Activated CD4-positive, alpha-beta memory T cell treated with anti-CD3 and anti-CD28 coated beads, Interleukin-2, amount 10 ng/mL, durations not matched to agents 7 days and 5 days (primary cell): ENCODE measurements at regions of chr18 and their contacts with region 1.

Region 1: DNA sequence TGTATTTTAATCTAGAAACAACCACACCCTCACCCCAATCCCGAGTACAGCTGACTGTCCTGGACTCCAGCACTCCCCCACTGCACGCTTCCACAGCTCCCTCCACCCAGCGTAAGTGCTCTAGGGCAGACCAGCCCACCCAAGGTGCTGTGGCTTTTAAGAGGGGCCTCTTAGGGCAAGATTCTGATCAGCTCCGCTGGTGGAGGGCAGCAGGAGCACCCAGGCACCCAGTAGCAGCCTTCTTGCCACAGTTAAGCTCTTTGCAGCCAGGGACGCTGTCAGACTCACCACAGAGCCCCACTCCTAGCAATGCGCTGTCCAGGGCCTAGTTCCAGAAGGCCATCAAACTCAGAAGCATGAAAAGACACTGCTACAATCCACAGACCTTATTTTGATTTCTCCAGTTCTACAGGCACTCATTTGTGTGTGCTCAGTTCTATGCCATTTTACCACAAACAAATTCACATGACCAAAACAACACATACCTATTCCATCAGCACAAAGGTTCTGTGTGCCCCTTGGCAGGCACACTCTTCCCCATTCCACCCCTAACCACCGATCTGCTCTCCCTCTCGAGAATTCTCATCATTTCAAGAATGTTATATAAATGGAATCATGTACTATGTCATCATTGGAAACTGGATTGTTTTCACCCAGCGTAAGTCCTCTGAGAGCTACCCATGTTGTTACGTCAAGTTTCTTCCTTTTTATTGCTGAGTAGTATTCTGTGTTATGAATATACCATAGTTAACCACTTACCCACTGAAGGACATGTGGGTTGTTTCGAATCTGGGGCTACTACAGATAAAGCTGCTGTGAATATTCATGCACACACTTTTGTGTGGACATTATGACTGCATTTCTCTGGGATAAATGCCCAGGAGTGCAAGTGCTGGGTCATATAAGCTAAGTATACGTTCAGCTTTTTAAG is 40.4 kb downstream of the PTPN2 start:
- DNase-seq: no peak
- H3K4me3 Mint-ChIP-seq: peak overlapping the region; percentile 8
- H3K27ac Mint-ChIP-seq: peak overlapping the region; percentile 63
- H3K4me1 Mint-ChIP-seq: peaks cover 72% of the 10 kb centered on the region
- H3K27me3 Mint-ChIP-seq: no peaks in the 10 kb centered on the region

Region 2: GRCh38 chr18:12750076-12750714 is 93.5 kb before region 1 on chr18:
- CTCF ChIA-PET with region 1: no interaction called
- POLR2A ChIA-PET with region 1: no interaction called
- DNase-seq: peak; percentile 28
- H3K4me3 Mint-ChIP-seq: no peak overlapping the region
- H3K27ac Mint-ChIP-seq: no peak overlapping the region
- H3K4me1 Mint-ChIP-seq: peaks cover 13% of the 10 kb centered on the region
- H3K27me3 Mint-ChIP-seq: peaks cover 4% of the 10 kb centered on the region

Region 3: DNA sequence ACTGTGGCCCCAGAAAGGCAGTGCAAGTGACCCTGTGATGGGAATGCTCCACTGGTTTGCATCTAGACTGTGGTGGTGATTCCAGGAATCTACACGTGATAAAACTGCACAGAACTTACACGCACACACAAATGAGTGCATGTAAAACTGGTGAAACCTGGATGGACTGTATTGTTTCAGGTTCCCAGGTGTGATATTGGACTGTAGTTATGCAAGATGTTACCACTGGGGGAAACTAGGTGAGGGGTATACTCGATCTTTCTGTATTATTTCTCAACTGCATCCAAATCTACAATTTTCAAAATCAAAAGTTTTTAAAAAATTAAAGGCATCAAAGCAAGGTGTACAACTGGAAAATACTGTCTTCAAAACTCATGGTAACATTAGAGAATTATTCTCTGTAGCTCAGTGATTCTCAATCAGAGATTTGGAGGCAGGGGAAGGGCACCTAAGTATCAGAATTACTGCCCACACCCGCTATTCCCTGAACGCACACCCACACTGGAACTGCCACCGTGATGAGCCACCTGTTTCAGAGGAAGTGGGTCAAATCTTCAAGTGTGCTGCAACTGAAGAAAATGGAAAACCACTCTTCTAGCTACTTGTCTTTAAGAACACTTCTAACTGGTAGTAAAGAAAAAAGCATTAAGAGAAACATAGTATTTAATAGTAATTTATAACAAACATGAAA is 13.7 kb after region 1 on chr18:
- CTCF ChIA-PET with region 1: interaction called, 5 read pairs
- POLR2A ChIA-PET with region 1: interaction called, 16 read pairs
- DNase-seq: peak; percentile 35
- H3K4me3 Mint-ChIP-seq: peak overlapping the region; percentile 39
- H3K27ac Mint-ChIP-seq: peak overlapping the region; percentile 80
- H3K4me1 Mint-ChIP-seq: peaks cover 78% of the 10 kb centered on the region
- H3K27me3 Mint-ChIP-seq: no peaks in the 10 kb centered on the region

Region 4: DNA sequence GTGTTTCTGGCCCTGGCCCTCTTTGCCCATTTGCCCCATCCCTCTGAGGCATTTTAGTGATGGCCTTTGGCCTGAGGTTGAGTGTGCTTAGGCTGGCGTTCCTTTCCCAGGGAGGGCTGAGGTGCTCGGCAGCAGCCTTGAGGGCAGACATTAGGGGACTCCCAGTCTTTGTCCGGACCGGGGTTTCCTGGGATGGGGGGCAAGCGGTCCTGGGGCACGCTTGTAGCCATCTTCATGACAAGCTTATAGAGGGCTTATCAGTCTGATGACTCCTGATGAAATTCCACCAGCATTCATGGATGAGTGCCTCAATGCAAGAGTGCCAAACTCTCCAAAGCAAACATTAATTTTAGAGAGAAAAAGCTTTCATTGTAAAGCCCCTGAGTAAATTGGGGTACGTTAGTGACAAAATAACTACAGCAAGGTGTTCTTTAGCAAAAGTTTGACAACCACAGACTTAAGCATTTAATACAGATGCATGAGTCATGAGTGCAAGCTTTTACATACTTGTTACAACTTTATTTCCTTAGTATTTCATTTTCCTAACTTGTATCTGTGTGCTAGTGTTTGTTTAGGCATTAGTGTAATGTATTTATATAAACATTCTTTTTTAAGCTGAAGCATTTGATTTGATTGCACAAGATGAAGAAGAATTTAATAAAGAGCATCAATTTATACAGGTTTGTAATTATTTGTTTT is 193.1 kb after region 1 on chr18:
- CTCF ChIA-PET with region 1: no interaction called
- POLR2A ChIA-PET with region 1: no interaction called
- DNase-seq: no peak
- H3K4me3 Mint-ChIP-seq: no peak overlapping the region
- H3K27ac Mint-ChIP-seq: no peak overlapping the region
- H3K4me1 Mint-ChIP-seq: peaks cover 8% of the 10 kb centered on the region
- H3K27me3 Mint-ChIP-seq: no peaks in the 10 kb centered on the region